ENCODE measurements at regions of chr17 and their contacts with region 1.

Region 1: DNA sequence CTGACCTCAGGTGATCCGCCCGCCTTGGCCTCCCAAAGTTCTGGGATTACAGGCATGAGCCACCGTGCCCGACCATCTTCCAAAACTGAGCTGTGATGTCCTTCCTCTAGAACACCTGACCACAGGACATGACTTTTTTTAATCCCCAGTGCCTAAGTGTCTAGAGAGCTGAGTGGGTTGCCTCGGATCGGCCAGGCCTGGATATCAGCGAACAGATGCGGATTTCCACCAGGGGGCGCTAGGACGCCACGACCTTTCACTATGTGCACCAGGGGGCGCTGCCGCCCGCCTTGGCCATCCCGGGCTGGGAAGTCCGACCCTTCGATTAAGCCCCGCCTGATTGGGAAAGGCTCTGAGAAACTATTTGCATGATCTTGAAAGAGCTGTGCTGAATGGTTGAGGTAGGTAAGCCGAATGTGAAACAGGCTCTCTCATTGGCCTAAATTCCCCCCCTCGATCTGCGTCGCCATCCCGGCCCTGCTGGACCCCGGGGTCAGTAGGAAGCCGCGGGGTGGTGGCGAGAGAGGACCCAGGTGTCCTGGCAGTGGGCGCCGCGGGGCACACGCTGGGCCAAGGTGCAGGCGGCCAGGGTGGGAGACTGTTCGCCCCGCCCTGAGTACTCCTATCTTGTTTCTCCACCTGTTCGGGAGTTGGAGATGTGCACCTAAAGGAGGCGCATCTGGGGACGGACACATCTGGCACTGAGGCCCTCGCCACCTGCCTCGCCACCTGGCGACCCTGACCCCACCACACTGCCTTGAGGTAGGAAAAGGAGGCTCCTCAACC is at the start of gene ACBD4:
- DNase-seq: peak; percentile 96
- H3K4me3 Mint-ChIP-seq: peak within 1 kb of the TSS; percentile 87
- H3K27ac Mint-ChIP-seq: peak within 1 kb of the TSS; percentile 68
- H3K4me1 Mint-ChIP-seq: peaks cover 15% of the 10 kb centered on the region
- H3K27me3 Mint-ChIP-seq: peaks cover 6% of the 10 kb centered on the region
- total RNA-seq, gene ACBD4: 11.3 and 12.5 TPM in 2 replicates

Region 2: GRCh38 chr17:44997733-44998520 is 137.5 kb before region 1 on chr17:
- intact Hi-C with region 1: no loop called
- DNase-seq: no peak
- H3K4me3 Mint-ChIP-seq: no peak overlapping the region
- H3K27ac Mint-ChIP-seq: no peak overlapping the region
- H3K4me1 Mint-ChIP-seq: no peaks in the 10 kb centered on the region
- H3K27me3 Mint-ChIP-seq: peaks cover 26% of the 10 kb centered on the region

Region 3: GRCh38 chr17:45098869-45099616 is 36.3 kb before region 1 on chr17:
- intact Hi-C with region 1: loop called (anchors 2 kb)
- DNase-seq: peak; percentile 58
- H3K4me3 Mint-ChIP-seq: no peak overlapping the region
- H3K27ac Mint-ChIP-seq: no peak overlapping the region
- H3K4me1 Mint-ChIP-seq: no peaks in the 10 kb centered on the region
- H3K27me3 Mint-ChIP-seq: no peaks in the 10 kb centered on the region

Region 4: DNA sequence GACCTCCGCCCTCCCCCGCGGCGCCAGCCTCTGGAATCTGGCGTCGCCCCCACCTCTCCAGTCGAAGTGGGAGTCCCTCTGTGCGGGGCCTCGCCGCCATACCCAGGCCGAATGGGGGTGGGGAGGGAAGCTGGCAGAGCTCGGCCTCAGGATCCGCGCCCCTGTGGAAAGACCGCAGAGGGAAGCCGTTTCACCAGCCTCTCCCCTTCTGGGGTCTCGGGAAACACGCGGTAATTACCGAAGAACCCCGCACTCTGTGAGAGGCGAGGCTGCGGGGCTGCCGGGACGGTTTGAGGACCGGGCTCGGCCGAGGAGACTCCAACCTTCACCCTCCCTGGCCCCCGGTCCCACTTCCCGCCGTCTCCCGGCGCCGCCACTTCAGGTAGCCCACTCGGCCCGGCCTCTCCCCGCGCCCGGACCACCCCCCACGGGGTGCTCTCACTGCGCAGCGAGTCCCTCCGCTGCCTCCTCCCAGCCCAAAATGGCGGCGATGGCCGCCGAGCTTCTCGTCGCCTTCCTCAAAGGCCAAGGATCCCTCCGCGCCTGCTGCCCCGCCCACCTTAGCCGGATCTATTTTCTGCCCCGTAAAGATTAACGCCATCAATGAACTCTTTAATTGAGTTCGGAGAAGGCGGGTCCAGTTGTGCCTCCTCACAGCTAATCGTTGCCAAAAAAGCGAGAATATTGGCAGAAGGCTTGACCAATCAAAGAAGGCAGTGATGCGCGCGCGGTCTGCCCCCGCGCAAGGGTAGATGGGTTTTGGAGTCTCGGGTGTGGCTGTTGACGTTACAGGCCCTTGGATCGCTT is 25.8 kb after region 1 on chr17:
- intact Hi-C with region 1: loop called (anchors 1 kb)
- DNase-seq: peak; percentile 98
- H3K4me3 Mint-ChIP-seq: peak overlapping the region; percentile 98
- H3K27ac Mint-ChIP-seq: peak overlapping the region; percentile 98
- H3K4me1 Mint-ChIP-seq: peaks cover 32% of the 10 kb centered on the region
- H3K27me3 Mint-ChIP-seq: no peaks in the 10 kb centered on the region

Region 5: DNA sequence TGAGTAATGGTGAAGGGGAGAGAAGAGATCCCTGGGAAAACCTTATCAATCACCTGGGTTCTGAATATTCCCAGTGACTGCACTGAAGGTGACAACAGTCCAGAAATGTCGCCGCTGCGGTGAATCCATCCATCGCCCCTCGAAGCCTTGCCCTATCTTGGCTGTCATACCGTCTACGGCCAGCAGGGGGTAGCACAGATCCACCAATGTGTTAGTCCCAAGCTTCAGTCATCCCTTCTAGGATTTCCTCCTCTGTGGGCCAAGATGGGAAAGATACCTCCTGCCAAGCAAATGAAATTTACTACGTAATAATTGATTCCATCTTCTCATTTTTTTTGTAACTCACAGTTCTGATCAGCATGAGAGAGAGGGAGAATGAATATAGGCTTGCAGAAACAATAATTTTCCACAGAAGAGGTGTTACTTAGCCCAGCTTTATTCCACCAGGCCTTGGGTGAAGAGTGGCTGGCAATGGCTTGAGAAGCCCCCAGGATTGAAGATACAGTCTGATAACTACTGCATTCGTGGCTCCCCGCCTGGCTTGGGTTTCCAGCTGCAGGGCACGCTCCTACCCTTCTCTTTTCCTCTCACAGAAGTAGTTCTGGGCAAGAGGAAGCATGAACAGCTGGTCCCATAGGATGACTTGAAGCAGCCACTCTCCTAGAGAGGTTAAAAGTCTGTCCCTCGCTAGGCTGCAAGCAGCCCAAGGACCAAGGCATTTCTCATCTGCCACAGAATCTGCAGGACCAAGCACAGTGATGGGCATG is 83.7 kb after region 1 on chr17:
- intact Hi-C with region 1: loop called (anchors 1 kb)
- DNase-seq: peak; percentile 73
- H3K4me3 Mint-ChIP-seq: peak overlapping the region; percentile 93
- H3K27ac Mint-ChIP-seq: peak overlapping the region; percentile 80
- H3K4me1 Mint-ChIP-seq: peaks cover 42% of the 10 kb centered on the region
- H3K27me3 Mint-ChIP-seq: no peaks in the 10 kb centered on the region

Region 6: GRCh38 chr17:45385331-45385997 is 250.1 kb after region 1 on chr17:
- intact Hi-C with region 1: loop called (anchors 5 kb)
- DNase-seq: peak; percentile 81
- H3K4me3 Mint-ChIP-seq: no peak overlapping the region
- H3K27ac Mint-ChIP-seq: peak overlapping the region; percentile 77
- H3K4me1 Mint-ChIP-seq: peaks cover 24% of the 10 kb centered on the region
- H3K27me3 Mint-ChIP-seq: peaks cover 12% of the 10 kb centered on the region